PC-9 (cell line): ENCODE measurements at regions of chr5 and their contacts with region 1.

Region 1: GRCh38 chr5:37391591-37391990 is 12.5 kb downstream of the WDR70 start:
- DNase-seq: no peak
- H3K4me3 ChIP-seq: no peak overlapping the region
- H3K27ac ChIP-seq: no peak overlapping the region
- H3K4me1 ChIP-seq: no peaks in the 10 kb centered on the region
- H3K27me3 ChIP-seq: no peaks in the 10 kb centered on the region
- CTCF ChIP-seq: no peak

Region 2: GRCh38 chr5:38613988-38614833 is 1222.6 kb after region 1 on chr5:
- CTCF ChIA-PET with region 1: no interaction called
- POLR2A ChIA-PET with region 1: interaction called, 12 read pairs
- intact Hi-C with region 1: no loop called
- DNase-seq: peak; percentile 64 to 83
- H3K4me3 ChIP-seq: no peak overlapping the region
- H3K27ac ChIP-seq: no peak overlapping the region
- H3K4me1 ChIP-seq: peaks cover 11% of the 10 kb centered on the region
- H3K27me3 ChIP-seq: no peaks in the 10 kb centered on the region
- CTCF ChIP-seq: no peak